ENCODE measurements at regions of chr10 and their contacts with region 1.

Region 1: GRCh38 chr10:8315619-8316021 is 261.1 kb downstream of the GATA3 start:
- DNase-seq: peak; percentile 51
- H3K4me3 Mint-ChIP-seq: no peak overlapping the region
- H3K27ac Mint-ChIP-seq: peak overlapping the region; percentile 85
- H3K4me1 Mint-ChIP-seq: peaks cover 41% of the 10 kb centered on the region
- H3K27me3 Mint-ChIP-seq: peaks cover 4% of the 10 kb centered on the region

Region 2: DNA sequence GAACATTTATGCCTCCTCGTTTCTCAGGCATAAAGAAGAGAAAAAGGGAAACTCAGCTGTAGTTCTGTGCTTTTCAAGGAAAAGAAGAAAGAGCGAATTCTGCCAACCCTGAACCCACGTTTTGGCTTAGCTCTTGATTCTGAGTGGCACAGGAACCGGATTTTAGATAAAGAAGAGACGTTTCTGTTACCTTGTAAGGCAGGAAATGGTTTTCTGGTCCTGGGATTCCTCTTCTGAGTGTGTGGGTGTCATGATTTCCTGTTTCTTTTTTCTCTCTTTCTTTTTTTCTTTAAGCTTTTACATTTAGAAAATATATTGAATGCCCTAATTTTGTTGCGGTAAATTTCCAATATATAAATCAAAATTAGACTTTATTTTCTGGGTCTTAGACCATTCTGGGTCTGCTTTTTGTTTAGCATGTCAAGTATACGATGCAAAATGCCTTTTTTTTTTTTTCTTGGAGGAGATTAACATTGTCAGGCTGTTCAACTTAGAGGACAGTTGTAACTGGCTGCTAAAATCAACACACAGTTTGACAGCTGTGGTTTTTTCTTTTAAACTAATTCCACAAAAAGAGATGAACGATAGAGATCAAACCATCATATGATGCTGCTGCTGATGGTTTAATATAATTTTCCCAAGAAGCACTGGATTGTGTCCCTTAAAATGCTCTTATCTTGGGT is 70.3 kb before region 1 on chr10:
- CTCF ChIA-PET with region 1: no interaction called
- POLR2A ChIA-PET with region 1: no interaction called
- intact Hi-C with region 1: loop called (anchors 2 kb)
- DNase-seq: no peak
- H3K4me3 Mint-ChIP-seq: peak overlapping the region; percentile 18
- H3K27ac Mint-ChIP-seq: peak overlapping the region; percentile 82
- H3K4me1 Mint-ChIP-seq: peaks cover 51% of the 10 kb centered on the region
- H3K27me3 Mint-ChIP-seq: no peaks in the 10 kb centered on the region

Measured in activated CD4-positive, alpha-beta memory T cell treated with anti-CD3 and anti-CD28 coated beads for 36 hours (primary cell).